HEK293 (cell line): ENCODE measurements at regions of chr12 and their contacts with region 1.

Region 1: DNA sequence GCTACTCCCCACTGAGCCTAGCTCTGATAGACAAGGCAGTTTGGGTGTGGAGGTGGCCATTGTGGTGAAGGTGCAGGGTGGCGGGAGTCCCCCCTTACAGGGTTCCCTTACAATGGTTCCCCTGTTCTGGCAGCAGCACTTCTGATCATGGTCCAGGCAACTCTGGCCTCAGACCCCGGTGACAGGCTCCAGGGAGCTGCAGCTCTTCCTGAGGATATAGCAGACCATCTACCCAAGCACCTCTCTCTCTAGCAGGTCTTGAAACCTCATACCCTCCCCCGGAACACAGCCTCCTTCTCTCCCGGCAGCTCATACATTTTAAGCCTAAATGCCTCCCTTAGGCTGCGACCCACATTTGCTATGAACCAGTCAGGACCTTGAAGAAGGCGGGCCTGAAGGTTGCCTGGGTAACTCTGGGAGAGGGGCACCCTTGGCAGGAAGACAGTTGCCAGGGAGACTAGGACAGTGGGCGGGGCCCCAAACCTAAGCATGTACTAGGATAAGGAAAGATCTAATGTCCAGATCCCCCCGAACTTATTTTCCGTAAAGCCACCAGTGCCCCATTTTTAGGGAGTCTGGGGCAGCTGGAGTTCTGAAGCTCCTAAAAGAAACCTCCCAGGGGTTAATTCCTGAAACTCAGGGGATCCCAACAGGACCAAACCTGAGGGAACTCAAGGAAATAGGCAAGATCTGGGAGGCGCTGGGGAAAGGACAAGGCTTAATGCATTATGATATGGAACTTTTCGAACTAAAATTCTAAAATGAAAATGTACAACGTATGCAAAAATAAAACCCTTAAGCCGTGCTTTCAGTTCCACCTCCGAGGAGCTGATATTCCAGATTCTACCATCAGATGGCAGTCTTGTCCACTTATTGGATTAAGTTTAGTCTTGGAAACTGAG is 4.5 kb upstream of the GDF11 start:
- H3K4me3 ChIP-seq: peak overlapping the region; percentile 43
- H3K27ac ChIP-seq: peak overlapping the region; percentile 43; the same call in 1 of the 2 replicates
- H3K4me1 ChIP-seq: peaks cover 11% of the 10 kb centered on the region; the same call in 1 of the 2 replicates
- CTCF ChIP-seq: peak; percentile 57; the same call in 1 of the 2 replicates

Region 2: GRCh38 chr12:55647027-55647426 is 91.3 kb before region 1 on chr12:
- CTCF ChIA-PET with region 1: interaction called, 11 read pairs
- POLR2A ChIA-PET with region 1: no interaction called
- H3K4me3 ChIP-seq: no peak overlapping the region
- H3K27ac ChIP-seq: no peak overlapping the region; the same call in 1 of the 2 replicates
- H3K4me1 ChIP-seq: no peaks in the 10 kb centered on the region
- CTCF ChIP-seq: no peak

Region 3: DNA sequence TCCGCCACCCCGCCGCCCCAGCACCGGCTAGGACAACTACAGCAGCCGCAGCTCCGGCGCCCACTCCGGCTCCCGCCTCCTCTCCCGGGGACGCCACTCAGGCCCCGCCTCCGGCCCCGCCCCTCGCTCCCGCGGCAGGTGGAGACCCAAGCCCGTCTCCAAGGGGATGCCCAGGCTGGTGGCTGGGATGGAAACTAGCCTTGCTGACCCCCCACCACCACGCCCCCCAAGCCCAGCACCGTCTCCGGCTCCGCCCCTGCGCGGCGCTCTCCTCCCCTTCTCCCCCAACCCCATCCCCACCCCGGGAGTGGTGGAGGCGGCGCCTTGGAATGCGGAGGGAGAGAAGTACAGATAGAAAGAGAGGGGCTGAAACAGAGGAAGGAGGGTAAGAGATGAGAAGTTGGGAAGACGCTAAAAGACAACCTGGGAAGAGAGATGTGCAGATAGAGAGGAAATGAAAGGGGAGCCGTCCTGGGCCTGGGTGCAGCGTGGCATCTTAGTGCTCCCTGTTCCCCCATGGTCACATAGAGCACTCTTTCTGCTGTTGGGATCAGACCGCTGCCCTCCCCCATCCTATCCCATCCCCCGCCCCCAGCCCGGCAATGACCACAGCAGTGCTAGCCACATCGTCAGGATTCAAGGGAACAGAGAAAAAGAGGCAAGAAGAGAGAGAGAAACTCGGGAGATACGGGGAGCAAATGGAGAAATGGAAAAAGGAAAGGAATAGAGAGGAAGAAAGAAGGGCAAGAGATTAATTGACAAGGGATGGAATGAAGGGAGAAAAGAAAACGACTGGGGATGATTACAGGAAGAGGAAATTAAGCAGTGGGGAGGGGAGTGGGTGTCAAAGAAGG is 30.3 kb before region 1 on chr12 and contains the start of gene ITGA7:
- CTCF ChIA-PET with region 1: interaction called, 16 read pairs
- POLR2A ChIA-PET with region 1: no interaction called
- H3K4me3 ChIP-seq: peak within 1 kb of the TSS; percentile 48
- H3K27ac ChIP-seq: no peak within 1 kb of the TSS; the same call in 1 of the 2 replicates
- H3K4me1 ChIP-seq: no peaks in the 10 kb centered on the region; the same call in 1 of the 2 replicates
- CTCF ChIP-seq: no peak

Region 4: DNA sequence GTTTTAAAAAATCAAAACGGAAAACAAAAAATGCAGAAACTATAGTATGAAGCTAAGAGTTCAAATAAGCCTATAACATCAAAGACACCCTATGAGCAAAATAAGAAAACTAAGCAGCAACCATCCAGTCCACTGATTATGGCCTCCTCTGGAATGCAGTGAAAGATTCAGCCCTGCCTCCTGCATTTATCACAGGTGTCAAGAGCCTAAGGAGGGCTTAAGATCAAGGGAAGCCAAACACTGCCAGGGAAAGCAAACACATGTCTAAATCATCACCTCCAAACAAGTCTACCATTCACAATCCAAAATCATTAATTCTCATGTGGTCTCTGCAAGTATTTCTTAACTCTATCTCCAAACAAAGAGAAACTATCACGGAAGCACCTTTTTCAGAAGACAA is 50.8 kb after region 1 on chr12:
- CTCF ChIA-PET with region 1: interaction called, 79 read pairs
- POLR2A ChIA-PET with region 1: interaction called, 3 read pairs
- H3K4me3 ChIP-seq: no peak overlapping the region
- H3K27ac ChIP-seq: no peak overlapping the region
- H3K4me1 ChIP-seq: no peaks in the 10 kb centered on the region
- CTCF ChIP-seq: no peak

Region 5: DNA sequence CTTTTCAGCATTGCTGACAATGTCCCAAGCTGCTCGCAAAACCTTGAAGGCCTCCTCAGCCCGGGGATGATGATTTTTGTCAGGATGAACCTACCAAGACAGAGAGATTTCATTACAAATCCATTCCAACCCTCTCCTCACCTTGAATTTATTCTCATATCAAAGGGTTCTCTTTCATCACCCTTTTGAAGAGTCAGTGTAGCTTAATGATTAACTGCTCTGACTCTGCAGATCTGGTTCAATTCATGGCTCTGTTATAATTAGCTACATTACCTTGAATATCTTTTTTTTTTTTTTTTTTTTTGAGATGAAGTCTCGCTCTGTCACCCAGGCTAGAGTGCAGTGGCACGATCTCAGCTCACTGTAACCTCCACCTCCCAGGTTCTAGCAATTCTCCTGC is 85.0 kb after region 1 on chr12:
- CTCF ChIA-PET with region 1: interaction called, 67 read pairs
- POLR2A ChIA-PET with region 1: interaction called, 12 read pairs
- H3K4me3 ChIP-seq: no peak overlapping the region
- H3K27ac ChIP-seq: no peak overlapping the region
- H3K4me1 ChIP-seq: peaks cover 14% of the 10 kb centered on the region
- CTCF ChIP-seq: no peak

Region 6: GRCh38 chr12:55931780-55932550 is 193.6 kb after region 1 on chr12:
- CTCF ChIA-PET with region 1: interaction called, 15 read pairs
- POLR2A ChIA-PET with region 1: interaction called, 9 read pairs
- H3K4me3 ChIP-seq: peak overlapping the region; percentile 58
- H3K27ac ChIP-seq: no peak overlapping the region; the same call in 1 of the 2 replicates
- H3K4me1 ChIP-seq: peaks cover 4% of the 10 kb centered on the region; the same call in 1 of the 2 replicates
- CTCF ChIP-seq: no peak

Region 7: DNA sequence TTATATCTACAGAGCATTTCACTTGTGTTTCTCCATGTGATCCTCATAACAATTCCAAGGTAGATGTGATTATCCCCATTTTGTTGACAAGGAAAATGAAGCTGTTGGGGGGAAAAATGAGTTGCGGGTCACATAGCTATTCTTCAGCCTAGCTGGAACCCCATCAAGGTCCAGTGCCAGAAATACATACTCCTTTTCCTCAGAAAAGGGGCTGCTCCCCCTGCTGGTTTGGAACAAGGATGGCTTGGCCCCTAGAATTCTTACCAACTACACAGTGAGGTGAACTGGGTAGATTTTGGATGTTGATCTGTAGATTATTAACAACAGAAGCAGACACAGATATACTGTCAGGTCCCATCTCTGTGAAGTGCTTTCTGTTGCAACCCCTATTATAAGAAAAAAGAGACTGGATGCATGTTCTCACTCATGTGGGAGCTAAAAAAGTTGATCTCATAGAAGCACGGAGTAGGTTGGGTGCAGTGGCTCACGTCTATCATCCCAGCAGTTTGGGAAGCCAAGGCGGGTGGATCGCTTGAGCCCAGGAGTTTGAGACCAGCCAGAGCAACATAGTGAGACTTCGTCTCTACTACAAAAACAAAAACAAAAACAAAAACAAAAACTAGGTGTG is 291.4 kb after region 1 on chr12:
- CTCF ChIA-PET with region 1: interaction called, 12 read pairs
- POLR2A ChIA-PET with region 1: no interaction called
- H3K4me3 ChIP-seq: no peak overlapping the region
- H3K27ac ChIP-seq: no peak overlapping the region
- H3K4me1 ChIP-seq: no peaks in the 10 kb centered on the region
- CTCF ChIP-seq: no peak